B cell (primary cell): ENCODE measurements at regions of chr12 and their contacts with region 1.

Region 1: DNA sequence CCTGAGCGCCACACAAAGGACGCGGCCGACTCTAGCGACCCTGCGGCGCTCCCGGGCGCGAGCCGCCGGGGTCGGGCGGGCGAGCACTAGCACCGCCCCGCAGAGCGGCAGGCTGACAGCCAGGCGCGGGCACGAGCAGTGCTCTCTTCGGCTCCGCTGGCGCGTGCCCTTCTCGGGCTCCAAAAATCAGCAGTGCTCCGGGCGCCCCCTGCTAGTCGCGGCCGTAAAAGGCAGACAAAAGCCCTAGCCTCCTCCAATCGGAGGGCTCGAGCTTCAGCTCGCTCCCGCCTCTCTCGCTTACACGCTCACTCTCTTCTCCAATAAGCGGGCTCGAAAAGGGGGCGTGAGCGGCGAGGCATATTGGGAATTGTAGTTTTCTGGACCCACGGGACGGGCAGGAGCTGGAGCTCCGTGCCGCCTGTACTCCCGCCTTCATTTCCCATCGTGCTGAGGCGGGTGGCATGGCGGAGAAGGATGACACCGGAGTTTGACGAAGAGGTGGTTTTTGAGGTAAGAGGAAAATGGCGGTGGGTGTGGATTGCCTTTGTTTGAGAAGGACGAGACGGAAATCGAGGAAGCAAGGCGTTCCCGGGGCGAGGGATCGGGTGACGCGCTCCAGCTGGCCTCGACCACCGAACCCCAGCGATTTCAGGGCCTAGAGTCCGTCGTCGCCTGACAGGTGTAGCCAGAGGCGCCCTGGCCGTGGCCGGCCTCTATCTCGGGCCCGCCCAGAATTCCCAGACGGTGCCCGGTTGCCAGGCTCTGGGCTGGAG is at the starts of genes FGD6 and VEZT:
- DNase-seq: peak; percentile 99
- ATAC-seq: peak; percentile 90
- H3K4me3 ChIP-seq: peak within 1 kb of the TSS; percentile 62 to 97 (median 94)
- H3K4me3 Mint-ChIP-seq: peak within 1 kb of the TSS; percentile 95
- H3K27ac ChIP-seq: peak within 1 kb of the TSS; percentile 88 to 92
- H3K27ac Mint-ChIP-seq: peak within 1 kb of the TSS; percentile 96
- H3K4me1 ChIP-seq: peaks cover 11% of the 10 kb centered on the region in 2 donors
- H3K4me1 Mint-ChIP-seq: peaks cover 38% of the 10 kb centered on the region
- H3K27me3 ChIP-seq: no peaks in the 10 kb centered on the region
- H3K27me3 Mint-ChIP-seq: no peaks in the 10 kb centered on the region
- CTCF ChIP-seq: peak; percentile 69
- total RNA-seq, gene FGD6: 7.3 and 8.4 TPM in 2 replicates
- total RNA-seq, gene VEZT: 61.8 and 69.3 TPM in 2 replicates

Region 2: GRCh38 chr12:94459728-94460615 is 757.6 kb before region 1 on chr12 and contains the start of gene CEP83:
- CTCF ChIA-PET with region 1: no interaction called
- POLR2A ChIA-PET with region 1: no interaction called
- intact Hi-C with region 1: loop called (anchors 5 kb)
- DNase-seq: peak; percentile 97
- ATAC-seq: peak; percentile 96
- H3K4me3 ChIP-seq: peak within 1 kb of the TSS; percentile 77 to 95 (median 88)
- H3K4me3 Mint-ChIP-seq: peak within 1 kb of the TSS; percentile 97
- H3K27ac ChIP-seq: peak within 1 kb of the TSS; percentile 92 to 96
- H3K27ac Mint-ChIP-seq: peak within 1 kb of the TSS; percentile 94
- H3K4me1 ChIP-seq: peaks cover 11 to 19% of the 10 kb centered on the region in 2 donors
- H3K4me1 Mint-ChIP-seq: peaks cover 23% of the 10 kb centered on the region
- H3K27me3 ChIP-seq: no peaks in the 10 kb centered on the region
- H3K27me3 Mint-ChIP-seq: no peaks in the 10 kb centered on the region
- CTCF ChIP-seq: no peak
- total RNA-seq, gene CEP83: 24.8 and 27.2 TPM in 2 replicates

Region 3: GRCh38 chr12:95072900-95073697 is 144.5 kb before region 1 on chr12 and contains the start of gene NR2C1:
- CTCF ChIA-PET with region 1: interaction called, 6 read pairs
- POLR2A ChIA-PET with region 1: no interaction called
- intact Hi-C with region 1: loop called (anchors 1 kb)
- DNase-seq: peak; percentile 96
- ATAC-seq: peak; percentile 99
- H3K4me3 ChIP-seq: peak within 1 kb of the TSS; percentile 69 to 94 (median 88)
- H3K4me3 Mint-ChIP-seq: peak within 1 kb of the TSS; percentile 97
- H3K27ac ChIP-seq: peak within 1 kb of the TSS; percentile 65 to 84
- H3K27ac Mint-ChIP-seq: peak within 1 kb of the TSS; percentile 91
- H3K4me1 ChIP-seq: peaks cover 0 to 14% of the 10 kb centered on the region in 2 donors
- H3K4me1 Mint-ChIP-seq: peaks cover 11% of the 10 kb centered on the region
- H3K27me3 ChIP-seq: no peaks in the 10 kb centered on the region
- H3K27me3 Mint-ChIP-seq: no peaks in the 10 kb centered on the region
- CTCF ChIP-seq: no peak
- total RNA-seq, gene NR2C1: 53.9 and 55.4 TPM in 2 replicates

Region 4: DNA sequence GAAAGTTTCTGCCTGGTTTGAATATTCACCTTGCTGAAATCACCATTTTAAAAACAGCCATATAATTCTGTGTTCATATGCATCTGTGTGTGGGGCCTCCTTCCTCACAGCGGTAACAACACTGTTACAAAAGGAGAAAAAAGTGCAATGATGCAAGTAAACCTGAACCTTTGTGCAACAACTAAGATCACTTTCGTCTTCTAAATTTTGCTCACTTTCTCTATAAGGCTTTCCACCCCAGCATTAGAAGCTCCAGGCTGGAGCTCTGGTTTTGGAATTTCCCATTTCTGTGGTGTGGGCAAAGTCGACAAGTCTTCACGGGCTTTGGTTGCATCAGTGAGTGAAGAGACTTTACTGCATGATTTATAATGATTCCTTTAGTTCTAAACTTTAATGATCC is 18.6 kb before region 1 on chr12:
- CTCF ChIA-PET with region 1: interaction called, 7 read pairs
- POLR2A ChIA-PET with region 1: interaction called, 8 read pairs
- intact Hi-C with region 1: loop called (anchors 1 kb)
- DNase-seq: peak; percentile 35
- ATAC-seq: peak; percentile 42
- H3K4me3 ChIP-seq: peak overlapping the region in 1 of 5 experiments; percentile 11
- H3K4me3 Mint-ChIP-seq: peak overlapping the region; percentile 63
- H3K27ac ChIP-seq: peak overlapping the region in 1 of 2 donors; percentile 26
- H3K27ac Mint-ChIP-seq: peak overlapping the region; percentile 80
- H3K4me1 ChIP-seq: peaks cover 4 to 9% of the 10 kb centered on the region in 2 donors
- H3K4me1 Mint-ChIP-seq: peaks cover 40% of the 10 kb centered on the region
- H3K27me3 ChIP-seq: no peaks in the 10 kb centered on the region
- H3K27me3 Mint-ChIP-seq: no peaks in the 10 kb centered on the region
- CTCF ChIP-seq: no peak

Region 5: GRCh38 chr12:95548539-95549391 is 331.2 kb after region 1 on chr12:
- CTCF ChIA-PET with region 1: no interaction called
- POLR2A ChIA-PET with region 1: no interaction called
- intact Hi-C with region 1: loop called (anchors 1 kb)
- DNase-seq: peak; percentile 87
- ATAC-seq: peak; percentile 91
- H3K4me3 ChIP-seq: peak overlapping the region; percentile 52 to 91 (median 81)
- H3K4me3 Mint-ChIP-seq: peak overlapping the region; percentile 92
- H3K27ac ChIP-seq: peak overlapping the region; percentile 73 to 78
- H3K27ac Mint-ChIP-seq: peak overlapping the region; percentile 85
- H3K4me1 ChIP-seq: peaks cover 12 to 13% of the 10 kb centered on the region in 2 donors
- H3K4me1 Mint-ChIP-seq: peaks cover 25% of the 10 kb centered on the region
- H3K27me3 ChIP-seq: peaks cover 0 to 7% (median 0%) of the 10 kb centered on the region in 4 experiments
- H3K27me3 Mint-ChIP-seq: peaks cover 6% of the 10 kb centered on the region
- CTCF ChIP-seq: no peak

Region 6: DNA sequence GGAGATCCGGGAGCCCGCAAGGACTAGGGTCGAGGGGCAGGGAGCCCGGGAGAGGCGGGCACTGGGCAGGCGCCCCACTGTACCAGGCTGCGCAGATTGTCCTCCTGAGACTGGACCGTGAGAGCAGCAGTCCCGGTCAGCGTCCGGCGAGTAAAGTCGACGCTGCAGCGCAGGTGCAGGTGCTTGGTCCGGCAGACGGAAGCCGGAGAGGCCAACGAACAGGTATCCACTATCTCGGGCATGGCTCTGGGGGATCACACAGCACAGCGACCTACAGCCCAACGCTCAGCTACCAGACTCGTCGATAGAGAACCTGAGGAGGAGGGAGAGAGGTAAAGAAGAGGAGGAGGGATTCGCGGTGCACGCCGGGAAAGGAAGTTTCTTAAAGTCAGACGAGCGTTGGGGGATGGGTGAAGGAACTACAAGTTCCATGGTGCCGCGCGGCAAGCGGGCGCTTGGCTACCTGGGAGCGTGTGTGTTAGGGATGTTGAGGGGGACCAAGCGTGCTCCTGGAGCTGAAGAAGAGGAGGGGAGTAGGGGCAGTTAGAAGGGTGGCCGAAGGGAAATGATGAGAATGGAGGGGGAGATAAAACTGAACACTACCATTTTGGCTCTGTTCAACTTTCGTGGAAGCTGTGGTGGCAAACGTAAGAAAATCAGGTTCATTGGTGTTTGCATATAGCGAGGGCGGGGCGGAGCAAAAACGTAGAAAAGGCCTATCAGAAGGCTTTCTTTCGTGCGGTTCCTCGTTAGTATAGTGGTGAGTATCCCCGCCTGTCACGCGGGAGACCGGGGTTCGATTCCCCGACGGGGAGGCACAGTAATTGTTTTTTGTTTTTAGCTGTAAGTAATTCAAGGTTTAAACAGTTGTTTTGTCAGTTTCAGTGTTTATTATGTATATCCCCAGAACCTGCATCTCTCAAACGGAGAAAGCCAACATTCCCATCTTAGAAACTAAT is 818.0 kb after region 1 on chr12 and contains the start of gene LTA4H:
- CTCF ChIA-PET with region 1: no interaction called
- POLR2A ChIA-PET with region 1: no interaction called
- intact Hi-C with region 1: loop called (anchors 5 kb)
- DNase-seq: peak; percentile 100
- ATAC-seq: peak; percentile 90
- H3K4me3 ChIP-seq: peak within 1 kb of the TSS; percentile 62 to 99 (median 92)
- H3K4me3 Mint-ChIP-seq: no peak within 1 kb of the TSS
- H3K27ac ChIP-seq: peak within 1 kb of the TSS; percentile 64 to 69
- H3K27ac Mint-ChIP-seq: no peak within 1 kb of the TSS
- H3K4me1 ChIP-seq: peaks cover 40 to 44% of the 10 kb centered on the region in 2 donors
- H3K4me1 Mint-ChIP-seq: peaks cover 15% of the 10 kb centered on the region
- H3K27me3 ChIP-seq: no peaks in the 10 kb centered on the region
- H3K27me3 Mint-ChIP-seq: no peaks in the 10 kb centered on the region
- CTCF ChIP-seq: no peak
- total RNA-seq, gene LTA4H: 158 and 167 TPM in 2 replicates